Vagina (tissue), 2 donors: ENCODE measurements at regions of chr4 and their contacts with region 1.

Region 1: DNA sequence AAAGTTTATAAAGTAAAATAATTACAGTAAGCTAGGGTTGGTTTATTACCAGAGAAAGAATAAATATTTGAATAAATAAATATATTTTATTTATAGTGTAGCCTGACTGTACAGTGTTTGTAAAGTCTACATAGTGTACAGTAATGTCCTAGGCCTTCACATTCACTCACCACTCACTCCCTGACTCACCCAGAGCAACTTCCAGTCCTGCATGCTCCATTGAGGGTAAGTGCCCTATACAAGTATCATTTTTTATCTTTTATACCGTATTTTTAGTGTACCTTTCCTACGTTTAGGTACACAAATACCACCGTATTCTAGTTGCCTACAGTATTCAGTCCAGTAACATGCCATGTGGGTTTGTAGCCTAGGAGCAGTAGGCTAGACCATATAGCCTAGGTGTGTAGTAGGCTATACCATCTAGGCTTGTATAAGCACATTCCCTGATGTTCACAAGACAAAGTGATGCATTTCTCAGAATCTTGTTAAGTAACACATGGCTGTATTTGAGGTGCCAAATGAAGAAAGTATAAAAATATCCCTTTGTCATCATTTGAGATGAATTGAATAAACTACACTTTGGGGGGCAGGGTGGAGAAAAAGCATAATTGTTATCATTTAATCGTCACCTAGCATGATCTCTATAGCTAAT is 14.7 kb upstream of the KLHL8 start:
- DNase-seq: no peak
- H3K4me3 ChIP-seq: peak overlapping the region; percentile 34 to 39
- H3K27ac ChIP-seq: peak overlapping the region; percentile 57
- H3K4me1 ChIP-seq: peaks cover 3% of the 10 kb centered on the region
- H3K27me3 ChIP-seq: no peaks in the 10 kb centered on the region
- CTCF ChIP-seq: no peak
- POLR2A ChIP-seq: no peak

Region 2: DNA sequence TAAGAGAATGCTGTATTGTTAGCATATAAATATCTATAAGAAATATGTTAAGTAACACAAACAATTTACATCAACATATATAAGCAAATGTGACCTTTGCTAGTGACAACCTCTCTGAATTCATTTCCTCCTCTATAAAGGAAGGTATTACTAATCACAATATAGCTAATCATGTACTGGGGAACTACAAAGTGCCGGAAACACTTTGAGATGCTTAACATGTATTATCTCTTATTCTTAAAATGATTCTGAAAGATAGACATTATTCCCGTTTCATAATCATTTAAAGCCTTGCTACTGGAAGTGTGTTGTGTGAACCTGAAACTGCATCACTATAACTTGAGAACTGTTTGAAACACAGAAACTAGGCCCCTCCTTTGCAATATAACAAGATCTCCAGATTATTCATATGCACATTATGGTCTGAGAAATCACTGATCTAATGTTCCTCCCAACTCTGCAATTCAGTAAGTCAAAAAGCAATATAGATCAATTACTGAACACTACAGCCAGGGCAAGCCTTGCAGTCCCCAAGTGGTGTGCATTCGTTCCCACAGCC is 68.8 kb before region 1 on chr4:
- intact Hi-C with region 1: loop called (anchors 10 kb)
- DNase-seq: no peak
- H3K4me3 ChIP-seq: no peak overlapping the region
- H3K27ac ChIP-seq: no peak overlapping the region
- H3K4me1 ChIP-seq: no peaks in the 10 kb centered on the region
- H3K27me3 ChIP-seq: no peaks in the 10 kb centered on the region
- CTCF ChIP-seq: no peak
- POLR2A ChIP-seq: no peak

Region 3: DNA sequence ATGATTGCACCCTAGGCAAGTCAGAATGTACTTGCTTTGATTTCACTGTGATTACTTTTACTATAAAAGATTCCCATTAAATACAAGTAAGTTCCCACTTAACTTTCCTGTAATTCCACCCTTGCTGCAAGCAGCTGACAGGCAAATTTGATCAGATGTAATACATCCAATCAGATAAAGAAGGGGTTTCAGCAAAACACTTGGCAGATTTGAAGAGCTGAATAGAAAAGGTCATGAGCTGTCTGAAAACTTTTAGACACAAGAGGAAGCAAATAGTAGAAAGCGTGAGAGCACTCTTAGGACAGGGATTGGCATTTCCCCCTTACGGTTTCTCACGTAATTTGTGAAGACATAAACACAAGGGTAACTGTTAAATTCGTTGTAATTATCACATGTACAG is 64.8 kb after region 1 on chr4:
- intact Hi-C with region 1: no loop called
- DNase-seq: no peak
- H3K4me3 ChIP-seq: no peak overlapping the region
- H3K27ac ChIP-seq: peak overlapping the region; percentile 12
- H3K4me1 ChIP-seq: peaks cover 25% of the 10 kb centered on the region
- H3K27me3 ChIP-seq: no peaks in the 10 kb centered on the region
- CTCF ChIP-seq: no peak
- POLR2A ChIP-seq: no peak